Heart left ventricle (tissue), 16 donors: ENCODE measurements at regions of chr5 and their contacts with region 1.

Region 1: DNA sequence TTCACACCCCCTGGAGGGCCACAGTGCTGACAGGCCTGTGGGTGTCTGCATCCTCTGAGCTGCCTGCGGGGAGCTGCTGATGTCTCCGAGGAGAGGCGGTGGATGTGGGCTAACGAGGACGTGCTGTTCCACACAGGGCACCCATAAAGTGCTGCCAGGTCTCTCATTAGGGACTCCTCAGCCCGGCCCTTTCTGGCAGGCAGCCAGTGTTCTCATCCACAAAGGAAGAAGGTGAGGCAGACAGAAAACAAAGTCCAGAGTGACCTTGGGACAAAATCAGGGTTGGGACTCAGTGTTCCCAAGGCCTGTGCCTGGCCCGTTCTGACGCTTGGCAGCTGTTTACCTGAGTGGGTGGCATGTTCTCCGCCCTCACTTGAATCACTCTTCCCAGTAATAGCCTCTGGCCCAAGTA is 29.3 kb downstream of the CARTPT start:
- DNase-seq: peak in 4 of 5 donors; percentile 19 to 84 (median 68)
- ATAC-seq: peak; percentile 20 to 95 (median 94)
- H3K4me3 ChIP-seq: no peak overlapping the region
- H3K27ac ChIP-seq: peak overlapping the region in 1 of 12 donors; percentile 43
- H3K4me1 ChIP-seq: peaks cover 0 to 6% (median 0%) of the 10 kb centered on the region in 12 donors
- H3K27me3 ChIP-seq: no peaks in the 10 kb centered on the region
- CTCF ChIP-seq: no peak
- POLR2A ChIP-seq: no peak

Region 2: DNA sequence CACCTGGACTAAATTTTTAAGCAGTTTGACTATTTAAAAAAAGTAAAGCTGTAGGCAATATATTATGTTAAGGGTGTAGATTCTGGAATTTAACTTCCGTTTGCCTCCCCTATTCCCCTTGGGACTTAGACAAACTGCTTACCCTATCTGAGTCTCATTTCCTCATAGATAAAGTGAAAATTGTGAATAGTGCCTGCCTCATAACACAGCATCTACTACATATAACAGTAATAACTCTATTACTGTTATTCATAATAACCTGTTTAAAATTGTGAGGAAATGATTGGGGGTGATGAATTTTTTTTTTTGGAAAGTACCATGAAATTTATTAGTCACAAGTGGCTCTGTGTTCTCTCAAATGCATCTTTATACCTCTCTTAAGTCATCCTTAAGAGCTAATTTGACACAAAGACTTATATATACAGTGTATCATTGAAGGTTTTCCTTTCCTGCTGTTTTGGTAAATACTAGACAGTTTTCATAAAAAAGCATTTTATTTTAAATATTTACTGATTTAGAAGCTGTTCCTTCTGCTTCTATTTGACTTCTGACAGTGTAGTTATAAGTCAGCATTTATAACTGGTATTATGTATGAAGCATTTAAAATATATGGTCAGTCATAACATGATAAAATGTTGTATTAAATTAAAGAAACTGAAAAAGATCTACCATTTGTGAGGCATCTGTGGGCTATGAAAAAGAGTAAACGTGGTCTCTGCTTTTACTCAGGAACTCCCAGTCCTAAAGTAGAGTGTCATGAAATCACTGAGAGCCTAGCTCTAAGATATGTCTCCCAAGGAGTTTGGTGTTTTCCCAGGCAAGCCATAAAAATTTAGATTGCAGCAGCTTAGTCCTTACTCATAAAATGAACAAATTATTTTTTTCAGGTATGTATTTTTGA is 114.9 kb before region 1 on chr5:
- intact Hi-C with region 1: no loop called
- DNase-seq: no peak
- ATAC-seq: no peak
- H3K4me3 ChIP-seq: no peak overlapping the region
- H3K27ac ChIP-seq: no peak overlapping the region
- H3K4me1 ChIP-seq: peaks cover 0 to 9% (median 0%) of the 10 kb centered on the region in 12 donors
- H3K27me3 ChIP-seq: no peaks in the 10 kb centered on the region
- CTCF ChIP-seq: no peak
- POLR2A ChIP-seq: no peak

Region 3: GRCh38 chr5:71767661-71768060 is 19.3 kb after region 1 on chr5:
- intact Hi-C with region 1: loop called in 1 of 10 experiments (anchors 1 kb)
- DNase-seq: no peak
- ATAC-seq: no peak
- H3K4me3 ChIP-seq: no peak overlapping the region
- H3K27ac ChIP-seq: no peak overlapping the region
- H3K4me1 ChIP-seq: no peaks in the 10 kb centered on the region
- H3K27me3 ChIP-seq: no peaks in the 10 kb centered on the region
- CTCF ChIP-seq: no peak
- POLR2A ChIP-seq: no peak

Region 4: GRCh38 chr5:71786337-71787055 is 38.1 kb after region 1 on chr5:
- intact Hi-C with region 1: no loop called
- DNase-seq: no peak
- ATAC-seq: no peak
- H3K4me3 ChIP-seq: no peak overlapping the region
- H3K27ac ChIP-seq: no peak overlapping the region
- H3K4me1 ChIP-seq: peaks cover 0 to 13% (median 3%) of the 10 kb centered on the region in 12 donors
- H3K27me3 ChIP-seq: no peaks in the 10 kb centered on the region
- CTCF ChIP-seq: no peak
- POLR2A ChIP-seq: no peak